ENCODE measurements at regions of chr11 and their contacts with region 1.

Region 1: DNA sequence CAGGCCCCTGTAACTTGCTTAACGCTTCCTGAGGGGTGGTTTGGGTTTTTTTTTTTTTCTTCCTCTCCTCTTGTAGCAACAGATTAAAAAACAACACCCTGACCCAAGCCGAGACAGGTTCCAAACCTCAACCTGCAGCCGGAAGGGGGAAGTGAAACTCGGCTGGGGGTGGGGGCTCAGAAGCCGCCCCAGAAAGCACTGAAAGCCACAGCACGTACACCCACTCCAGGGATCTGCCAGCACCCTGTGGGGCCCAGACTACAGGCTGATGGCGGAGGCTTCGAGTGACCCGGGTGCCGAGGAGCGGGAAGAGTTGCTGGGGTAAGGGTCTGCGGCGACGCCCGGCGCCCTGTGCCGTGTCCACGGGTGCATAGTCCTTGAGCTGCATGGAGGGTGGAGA is at the start of gene LSP1:
- DNase-seq: peak; percentile 93
- H3K4me3 Mint-ChIP-seq: peak within 1 kb of the TSS; percentile 92
- H3K27ac Mint-ChIP-seq: peak within 1 kb of the TSS; percentile 97
- H3K4me1 Mint-ChIP-seq: peaks cover 66% of the 10 kb centered on the region
- H3K27me3 Mint-ChIP-seq: no peaks in the 10 kb centered on the region
- total RNA-seq, gene LSP1: 179 to 181 TPM

Region 2: GRCh38 chr11:1763796-1764661 is 88.8 kb before region 1 on chr11 and contains the start of gene CTSD:
- CTCF ChIA-PET with region 1: interaction called, 3 read pairs
- POLR2A ChIA-PET with region 1: no interaction called
- intact Hi-C with region 1: loop called (anchors 2 kb)
- DNase-seq: peak; percentile 91
- H3K4me3 Mint-ChIP-seq: peak within 1 kb of the TSS; percentile 80
- H3K27ac Mint-ChIP-seq: peak within 1 kb of the TSS; percentile 62
- H3K4me1 Mint-ChIP-seq: peaks cover 33% of the 10 kb centered on the region
- H3K27me3 Mint-ChIP-seq: no peaks in the 10 kb centered on the region
- total RNA-seq, gene CTSD: 52.0 to 58.7 TPM

Region 3: GRCh38 chr11:1810761-1811160 is 42.1 kb before region 1 on chr11:
- CTCF ChIA-PET with region 1: no interaction called
- POLR2A ChIA-PET with region 1: no interaction called
- intact Hi-C with region 1: no loop called
- DNase-seq: no peak
- H3K4me3 Mint-ChIP-seq: no peak overlapping the region
- H3K27ac Mint-ChIP-seq: no peak overlapping the region
- H3K4me1 Mint-ChIP-seq: no peaks in the 10 kb centered on the region
- H3K27me3 Mint-ChIP-seq: peaks cover 6% of the 10 kb centered on the region

Region 4: GRCh38 chr11:1870721-1871466 is 18.0 kb after region 1 on chr11:
- CTCF ChIA-PET with region 1: interaction called, 7 read pairs
- POLR2A ChIA-PET with region 1: interaction called, 13 read pairs
- intact Hi-C with region 1: loop called (anchors 1 kb)
- DNase-seq: peak; percentile 51
- H3K4me3 Mint-ChIP-seq: peak overlapping the region; percentile 13
- H3K27ac Mint-ChIP-seq: no peak overlapping the region
- H3K4me1 Mint-ChIP-seq: peaks cover 50% of the 10 kb centered on the region
- H3K27me3 Mint-ChIP-seq: no peaks in the 10 kb centered on the region

Region 5: DNA sequence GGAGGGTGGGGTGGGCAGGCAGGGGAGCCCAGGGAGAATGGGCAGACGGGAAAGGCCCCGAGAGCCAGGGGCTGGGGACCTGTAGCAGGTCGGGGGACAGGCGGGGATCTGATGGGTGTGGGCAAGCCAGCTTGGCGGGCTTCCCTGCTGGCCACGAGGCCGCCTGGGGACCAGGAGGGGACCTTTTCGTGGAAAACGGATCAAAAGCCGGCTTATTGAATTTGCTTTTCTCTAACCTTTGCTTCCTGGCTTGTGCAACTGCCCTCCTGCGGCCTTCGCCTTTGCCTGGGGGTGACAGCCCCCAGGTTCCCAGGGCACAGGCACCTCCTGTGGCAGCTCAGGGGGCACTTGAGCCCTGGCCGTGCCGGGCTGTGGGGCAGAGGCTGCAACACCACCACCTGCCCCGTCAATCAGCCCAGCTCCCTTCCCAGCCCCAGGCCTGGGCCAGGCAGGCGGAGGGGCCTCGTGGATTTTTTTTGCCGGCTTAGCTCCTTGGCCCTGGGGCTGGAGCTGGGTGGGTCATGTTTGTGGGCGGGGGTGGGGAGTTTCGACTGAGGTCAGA is 186.4 kb after region 1 on chr11:
- CTCF ChIA-PET with region 1: no interaction called
- POLR2A ChIA-PET with region 1: no interaction called
- intact Hi-C with region 1: no loop called
- DNase-seq: no peak
- H3K4me3 Mint-ChIP-seq: no peak overlapping the region
- H3K27ac Mint-ChIP-seq: no peak overlapping the region
- H3K4me1 Mint-ChIP-seq: no peaks in the 10 kb centered on the region
- H3K27me3 Mint-ChIP-seq: no peaks in the 10 kb centered on the region

Region 6: DNA sequence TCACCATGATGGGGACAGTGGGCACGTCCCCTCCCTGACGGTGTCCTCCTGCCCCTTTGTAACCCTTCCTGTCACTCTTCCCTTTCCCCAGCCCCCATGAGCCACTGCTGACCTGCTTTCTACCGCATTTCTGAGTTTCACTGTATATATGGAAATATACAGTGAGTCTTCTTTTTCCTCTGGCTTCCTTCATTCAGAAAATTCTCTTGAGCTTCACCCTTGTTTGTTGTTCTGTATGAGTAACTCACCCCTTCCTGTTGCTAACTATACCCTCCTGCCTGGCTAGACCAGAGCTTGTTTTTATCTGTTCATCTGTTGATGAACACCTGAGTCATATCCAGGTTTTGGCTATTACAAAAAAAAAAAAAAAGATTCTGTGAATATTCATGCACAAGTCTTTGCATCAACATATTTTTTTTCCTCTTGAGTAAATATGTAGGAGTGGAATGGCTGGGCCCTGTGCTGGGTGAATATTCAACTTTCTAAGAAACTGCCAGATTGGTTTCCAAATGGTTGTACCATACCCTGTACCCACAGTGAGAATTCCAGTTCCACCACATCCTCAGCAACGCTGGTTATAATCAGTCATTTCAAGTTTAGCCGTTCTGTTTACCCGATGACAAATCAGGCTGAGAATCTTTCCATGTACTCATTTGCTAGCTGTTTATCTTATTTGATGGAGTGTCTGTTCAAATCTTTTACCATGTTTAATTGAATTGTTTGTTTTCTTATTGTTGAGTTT is 224.4 kb after region 1 on chr11:
- CTCF ChIA-PET with region 1: interaction called, 6 read pairs
- POLR2A ChIA-PET with region 1: interaction called, 4 read pairs
- intact Hi-C with region 1: loop called (anchors 1 kb)
- DNase-seq: peak; percentile 77
- H3K4me3 Mint-ChIP-seq: no peak overlapping the region
- H3K27ac Mint-ChIP-seq: peak overlapping the region; percentile 80
- H3K4me1 Mint-ChIP-seq: peaks cover 20% of the 10 kb centered on the region
- H3K27me3 Mint-ChIP-seq: peaks cover 22% of the 10 kb centered on the region

Region 7: DNA sequence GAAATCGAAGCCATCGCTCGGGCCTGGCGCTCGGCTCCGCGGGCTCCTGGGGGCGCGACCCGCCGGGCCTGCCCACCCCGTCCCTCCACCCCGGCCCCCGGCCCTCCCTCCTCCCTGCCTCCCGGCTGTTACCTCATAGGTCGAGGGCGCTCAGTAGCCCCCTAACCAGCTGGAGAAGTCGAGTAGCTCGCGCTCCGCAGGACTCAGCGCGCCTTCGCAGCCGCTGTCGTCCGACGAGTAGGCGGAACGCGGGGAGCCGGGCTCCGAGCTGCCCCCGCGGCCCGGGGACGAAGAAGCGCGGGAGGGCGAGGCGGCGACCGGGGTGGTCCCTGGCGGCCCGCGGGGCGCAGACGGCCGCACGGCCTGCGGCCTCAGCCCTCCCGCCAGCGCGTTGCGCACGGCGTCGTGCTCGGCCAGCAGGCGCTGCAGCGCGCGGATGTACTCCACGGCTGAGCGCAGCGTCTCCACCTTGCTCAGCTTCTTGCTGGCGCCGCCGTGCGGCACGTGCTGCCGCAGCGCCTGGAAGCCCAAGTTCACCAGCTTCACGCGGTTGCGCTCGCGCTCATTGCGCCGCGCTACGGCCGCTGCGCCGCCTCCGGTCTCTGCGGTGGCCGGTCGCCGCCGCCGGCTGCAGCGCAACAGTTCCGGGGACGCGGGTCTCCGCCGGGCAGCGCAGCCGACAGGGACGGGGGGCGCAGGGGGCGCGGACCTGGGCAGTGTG is 416.9 kb after region 1 on chr11:
- CTCF ChIA-PET with region 1: no interaction called
- POLR2A ChIA-PET with region 1: no interaction called
- intact Hi-C with region 1: loop called (anchors 5 kb)
- DNase-seq: peak; percentile 65
- H3K4me3 Mint-ChIP-seq: peak overlapping the region; percentile 52
- H3K27ac Mint-ChIP-seq: no peak overlapping the region
- H3K4me1 Mint-ChIP-seq: peaks cover 36% of the 10 kb centered on the region
- H3K27me3 Mint-ChIP-seq: peaks cover 38% of the 10 kb centered on the region

Measured in activated CD4-positive, alpha-beta memory T cell treated with anti-CD3 and anti-CD28 coated beads for 36 hours (primary cell).